ENCODE measurements at regions of chr7 and their contacts with region 1.

Region 1: GRCh38 chr7:44565097-44565794 is 8.5 kb downstream of the DDX56 start:
- DNase-seq: peak; percentile 36 to 88
- H3K4me3 ChIP-seq: no peak overlapping the region
- H3K27ac ChIP-seq: no peak overlapping the region
- H3K4me1 ChIP-seq: no peaks in the 10 kb centered on the region; a peak in 1 of 7 replicates
- H3K27me3 ChIP-seq: no peaks in the 10 kb centered on the region; a peak in 1 of 7 replicates
- CTCF ChIP-seq: peak; percentile 91 to 98 (median 96)
- EP300 ChIP-seq: no peak
- POLR2A ChIP-seq: no peak
- RAD21 ChIP-seq: peak; percentile 81 to 84

Region 2: DNA sequence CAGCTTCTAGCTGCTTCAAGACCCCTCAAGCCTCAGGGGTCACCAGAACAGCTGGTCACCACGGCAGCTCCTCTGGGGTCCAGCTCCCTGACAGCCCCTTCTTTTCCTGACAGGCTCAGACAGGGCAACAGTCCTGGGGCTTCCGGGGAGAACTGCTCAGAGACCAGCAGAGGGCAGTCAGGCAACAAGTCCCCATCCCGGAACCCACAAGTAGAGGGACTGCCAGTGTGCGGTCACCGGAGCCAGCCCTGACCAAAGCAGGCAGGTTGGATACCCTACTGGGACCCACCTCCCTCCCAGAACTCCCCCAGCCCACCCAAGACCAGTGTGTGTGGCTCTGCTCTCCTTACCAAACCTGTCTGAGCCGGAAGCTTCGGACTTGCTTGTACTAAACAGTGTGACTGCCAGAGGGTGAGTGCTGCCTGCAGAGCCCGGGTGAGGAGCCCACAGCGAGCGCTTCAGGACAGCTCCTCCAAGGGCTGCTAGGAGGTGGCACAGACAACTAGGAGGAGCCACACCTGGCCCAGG is 324.2 kb before region 1 on chr7:
- CTCF ChIA-PET with region 1: interaction called, 10 read pairs
- POLR2A ChIA-PET with region 1: no interaction called
- DNase-seq: peak in 1 of 2 experiments; percentile 76
- H3K4me3 ChIP-seq: no peak overlapping the region
- H3K27ac ChIP-seq: no peak overlapping the region
- H3K4me1 ChIP-seq: peaks cover 0 to 2% (median 0%) of the 10 kb centered on the region in 4 experiments; a peak in 2 of 7 replicates
- H3K27me3 ChIP-seq: no peaks in the 10 kb centered on the region; a peak in 1 of 7 replicates
- CTCF ChIP-seq: peak in 2 of 3 experiments; percentile 84 to 92; a peak in 3 of 4 replicates
- EP300 ChIP-seq: no peak
- POLR2A ChIP-seq: no peak
- RAD21 ChIP-seq: peak; percentile 81 to 89

Region 3: GRCh38 chr7:44490351-44491200 is 74.7 kb before region 1 on chr7 and contains the start of gene NUDCD3:
- CTCF ChIA-PET with region 1: interaction called, 30 read pairs
- POLR2A ChIA-PET with region 1: interaction called, 51 read pairs
- DNase-seq: peak; percentile 41 to 86
- H3K4me3 ChIP-seq: peak within 1 kb of the TSS; percentile 91 to 96 (median 94)
- H3K27ac ChIP-seq: peak within 1 kb of the TSS; percentile 91
- H3K4me1 ChIP-seq: peaks cover 0 to 5% (median 1%) of the 10 kb centered on the region in 4 experiments; a peak in 2 of 7 replicates
- H3K27me3 ChIP-seq: no peaks in the 10 kb centered on the region
- CTCF ChIP-seq: no peak
- EP300 ChIP-seq: no peak
- POLR2A ChIP-seq: peak in 1 of 2 experiments; percentile 86; a peak in 2 of 3 replicates
- RAD21 ChIP-seq: no peak
- total RNA-seq, gene NUDCD3: 83.8 and 93.7 TPM in 2 replicates

Region 4: DNA sequence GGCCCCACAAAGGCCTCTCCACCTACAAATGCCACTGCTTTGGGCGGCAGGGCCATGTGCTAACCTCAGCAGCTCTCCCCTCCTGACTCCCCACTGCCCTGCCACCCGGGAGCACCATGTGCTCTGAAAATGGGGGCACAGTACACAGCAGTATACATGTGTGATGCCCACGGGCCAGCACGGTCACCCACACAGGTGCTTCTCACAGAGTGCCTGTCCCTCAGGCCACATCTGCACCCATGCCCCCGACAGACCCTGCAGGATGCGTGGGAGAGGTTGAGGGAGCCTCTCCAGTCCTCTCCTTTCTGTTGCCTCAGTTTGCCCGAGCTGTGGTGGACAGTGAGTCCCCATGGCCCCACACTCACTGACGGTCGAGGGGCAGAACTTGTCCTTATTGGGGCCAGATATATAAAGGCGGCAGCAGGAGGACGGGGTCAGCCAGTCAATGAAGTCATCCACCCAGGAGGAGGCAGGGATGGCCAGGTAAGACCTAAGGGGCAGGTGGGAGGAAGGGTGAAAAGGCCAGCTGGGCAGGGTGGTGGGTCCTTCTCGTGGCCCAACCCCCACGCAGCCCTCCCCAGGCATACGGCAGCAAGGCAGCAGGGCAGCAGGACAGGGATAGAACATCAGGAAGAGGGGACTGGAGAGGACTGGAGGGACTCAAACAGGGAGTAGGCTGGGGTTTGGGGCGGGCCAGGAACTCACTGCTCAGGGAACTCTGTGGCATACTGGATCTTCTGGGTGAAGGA is 43.7 kb before region 1 on chr7:
- CTCF ChIA-PET with region 1: interaction called, 12 read pairs
- POLR2A ChIA-PET with region 1: interaction called, 4 read pairs
- DNase-seq: no peak
- H3K4me3 ChIP-seq: no peak overlapping the region
- H3K27ac ChIP-seq: no peak overlapping the region
- H3K4me1 ChIP-seq: no peaks in the 10 kb centered on the region
- H3K27me3 ChIP-seq: no peaks in the 10 kb centered on the region
- CTCF ChIP-seq: no peak
- EP300 ChIP-seq: no peak
- POLR2A ChIP-seq: no peak
- RAD21 ChIP-seq: no peak

Region 5: DNA sequence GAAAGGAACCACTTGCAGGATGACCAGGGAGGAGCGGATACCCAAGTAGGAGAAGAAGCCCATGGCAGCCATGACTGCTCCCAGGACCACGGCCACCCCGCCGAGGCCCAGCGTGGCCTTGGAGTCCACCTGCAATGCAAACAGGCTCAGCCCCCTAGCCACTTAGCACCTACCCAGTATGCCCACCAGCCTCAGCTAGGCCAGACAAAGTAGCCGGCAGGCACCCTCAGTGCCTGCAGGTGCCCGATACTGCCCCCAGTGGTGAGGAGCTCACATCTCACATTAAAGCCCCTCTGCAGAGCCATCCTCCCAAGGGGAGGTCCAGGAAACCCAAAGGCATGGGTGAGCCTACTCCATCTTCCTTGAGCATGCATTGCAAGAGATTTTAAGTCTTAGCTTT is 30.7 kb before region 1 on chr7:
- CTCF ChIA-PET with region 1: interaction called, 98 read pairs
- POLR2A ChIA-PET with region 1: interaction called, 5 read pairs
- DNase-seq: peak; percentile 39 to 85
- H3K4me3 ChIP-seq: no peak overlapping the region
- H3K27ac ChIP-seq: no peak overlapping the region
- H3K4me1 ChIP-seq: no peaks in the 10 kb centered on the region
- H3K27me3 ChIP-seq: no peaks in the 10 kb centered on the region
- CTCF ChIP-seq: peak; percentile 83 to 97 (median 84)
- EP300 ChIP-seq: no peak
- POLR2A ChIP-seq: no peak
- RAD21 ChIP-seq: peak; percentile 56 to 69

Region 6: GRCh38 chr7:44547536-44548231 is 17.6 kb before region 1 on chr7:
- CTCF ChIA-PET with region 1: interaction called, 98 read pairs
- POLR2A ChIA-PET with region 1: interaction called, 23 read pairs
- DNase-seq: no peak
- H3K4me3 ChIP-seq: no peak overlapping the region
- H3K27ac ChIP-seq: no peak overlapping the region
- H3K4me1 ChIP-seq: no peaks in the 10 kb centered on the region
- H3K27me3 ChIP-seq: no peaks in the 10 kb centered on the region
- CTCF ChIP-seq: no peak
- EP300 ChIP-seq: no peak
- POLR2A ChIP-seq: no peak
- RAD21 ChIP-seq: no peak

Region 7: DNA sequence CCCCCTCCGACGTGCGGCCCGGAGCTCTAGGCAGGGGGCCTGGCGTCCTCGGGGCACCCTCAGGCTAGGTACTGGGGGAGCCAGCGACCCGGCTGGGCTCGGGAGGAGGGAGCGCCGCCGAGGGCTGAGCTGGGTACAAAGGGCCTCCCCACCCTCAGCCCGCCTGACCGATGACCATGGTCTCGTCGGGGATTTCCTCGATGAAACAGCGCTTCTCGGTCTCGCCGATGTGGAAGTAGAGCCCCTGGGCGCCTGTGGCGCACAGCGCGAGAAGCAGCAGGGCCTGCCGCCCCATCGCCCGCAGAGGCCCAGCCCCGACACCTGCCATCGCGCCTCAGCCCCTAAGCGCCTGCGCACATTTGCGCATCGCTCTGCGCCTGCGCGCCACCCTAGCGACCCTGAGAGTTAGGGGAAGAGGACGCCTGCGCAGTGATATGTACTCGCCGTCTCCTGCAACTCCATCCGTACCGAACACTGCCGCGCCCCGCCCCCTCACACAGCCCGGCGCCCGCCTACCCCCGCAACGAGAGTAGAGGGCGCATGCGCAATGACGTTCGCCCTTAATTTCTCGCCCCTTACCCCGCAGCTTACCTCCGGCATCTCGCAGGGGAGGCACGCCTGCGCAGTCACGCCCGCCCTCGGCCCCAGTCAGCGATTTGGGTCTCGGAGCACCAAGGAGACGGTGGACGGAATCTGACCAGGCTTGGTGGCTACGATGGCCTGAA is 16.8 kb after region 1 on chr7 and contains the start of gene TMED4:
- CTCF ChIA-PET with region 1: interaction called, 23 read pairs
- POLR2A ChIA-PET with region 1: interaction called, 49 read pairs
- DNase-seq: peak; percentile 96 to 100
- H3K4me3 ChIP-seq: peak within 1 kb of the TSS; percentile 74 to 95 (median 80)
- H3K27ac ChIP-seq: peak within 1 kb of the TSS; percentile 65
- H3K4me1 ChIP-seq: peaks cover 0 to 7% (median 1%) of the 10 kb centered on the region in 4 experiments; a peak in 4 of 7 replicates
- H3K27me3 ChIP-seq: no peaks in the 10 kb centered on the region
- CTCF ChIP-seq: no peak
- EP300 ChIP-seq: no peak
- POLR2A ChIP-seq: peak; percentile 62 to 80
- RAD21 ChIP-seq: no peak
- total RNA-seq, gene TMED4: 41.1 and 44.9 TPM in 2 replicates

Region 8: DNA sequence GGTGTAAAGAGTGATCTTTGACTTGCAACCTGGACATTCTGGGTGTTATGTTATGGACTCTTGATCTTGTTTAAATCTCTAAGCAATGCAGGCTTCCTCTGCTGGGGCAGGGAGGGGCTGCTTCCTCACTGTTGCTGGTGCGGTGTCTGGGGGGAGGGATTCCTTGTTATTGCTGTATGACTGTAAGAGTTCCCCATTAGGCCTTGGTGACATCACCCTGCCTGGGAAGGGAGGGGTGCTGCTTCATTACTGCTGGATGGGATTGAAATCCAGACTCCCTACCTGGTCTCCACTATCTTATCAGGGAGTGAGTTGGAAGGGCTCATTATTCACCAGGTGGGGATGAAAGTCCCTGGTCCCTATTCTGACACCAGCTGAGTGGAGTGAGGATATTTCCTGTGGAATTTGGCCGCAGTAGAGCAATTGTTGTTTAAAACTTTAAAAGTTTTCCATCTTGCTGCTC is 49.9 kb after region 1 on chr7:
- CTCF ChIA-PET with region 1: no interaction called
- POLR2A ChIA-PET with region 1: no interaction called
- DNase-seq: no peak
- H3K4me3 ChIP-seq: no peak overlapping the region
- H3K27ac ChIP-seq: no peak overlapping the region
- H3K4me1 ChIP-seq: no peaks in the 10 kb centered on the region
- H3K27me3 ChIP-seq: no peaks in the 10 kb centered on the region
- CTCF ChIP-seq: no peak
- EP300 ChIP-seq: no peak
- POLR2A ChIP-seq: no peak
- RAD21 ChIP-seq: no peak

Region 9: DNA sequence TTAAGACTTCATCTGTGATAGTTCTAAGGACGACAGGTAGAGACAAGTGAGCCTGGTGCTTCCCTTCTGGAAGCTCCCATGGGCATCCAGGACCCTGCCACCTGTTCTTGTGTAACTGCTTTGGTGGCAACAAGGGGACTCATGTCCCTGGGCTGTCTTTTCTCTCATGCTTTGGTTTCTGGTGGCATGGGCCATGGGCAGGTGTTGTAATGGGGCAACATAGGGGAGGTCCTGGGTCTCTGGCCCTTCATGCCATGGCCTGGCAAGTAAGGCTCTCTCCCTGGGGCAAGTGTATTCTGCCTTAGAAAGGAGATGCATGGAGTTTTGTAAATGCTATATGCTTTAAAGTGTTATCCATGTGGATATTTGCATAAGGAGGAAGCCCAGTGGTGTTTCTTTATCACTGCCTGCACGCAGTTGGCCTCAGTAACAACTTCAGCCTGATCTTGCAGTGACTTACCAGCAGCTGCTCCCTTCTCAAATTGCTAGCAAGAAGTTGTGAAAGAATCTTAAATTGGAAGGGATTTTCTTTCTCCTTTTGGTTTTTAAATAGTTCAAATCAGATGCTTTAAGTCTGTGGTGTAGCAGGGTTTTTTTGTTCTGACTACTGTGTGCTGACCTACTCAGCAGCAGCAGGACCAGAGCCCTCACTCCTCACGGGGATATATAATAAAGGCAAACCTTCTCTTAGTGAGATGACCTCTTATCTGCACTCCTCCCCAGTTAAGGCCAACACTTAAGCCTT is 81.1 kb after region 1 on chr7:
- CTCF ChIA-PET with region 1: no interaction called
- POLR2A ChIA-PET with region 1: no interaction called
- DNase-seq: no peak
- H3K4me3 ChIP-seq: no peak overlapping the region
- H3K27ac ChIP-seq: no peak overlapping the region
- H3K4me1 ChIP-seq: no peaks in the 10 kb centered on the region
- H3K27me3 ChIP-seq: no peaks in the 10 kb centered on the region
- CTCF ChIP-seq: no peak
- EP300 ChIP-seq: no peak
- POLR2A ChIP-seq: no peak
- RAD21 ChIP-seq: no peak